ENCODE measurements at regions of chr19 and their contacts with region 1.

Region 1: DNA sequence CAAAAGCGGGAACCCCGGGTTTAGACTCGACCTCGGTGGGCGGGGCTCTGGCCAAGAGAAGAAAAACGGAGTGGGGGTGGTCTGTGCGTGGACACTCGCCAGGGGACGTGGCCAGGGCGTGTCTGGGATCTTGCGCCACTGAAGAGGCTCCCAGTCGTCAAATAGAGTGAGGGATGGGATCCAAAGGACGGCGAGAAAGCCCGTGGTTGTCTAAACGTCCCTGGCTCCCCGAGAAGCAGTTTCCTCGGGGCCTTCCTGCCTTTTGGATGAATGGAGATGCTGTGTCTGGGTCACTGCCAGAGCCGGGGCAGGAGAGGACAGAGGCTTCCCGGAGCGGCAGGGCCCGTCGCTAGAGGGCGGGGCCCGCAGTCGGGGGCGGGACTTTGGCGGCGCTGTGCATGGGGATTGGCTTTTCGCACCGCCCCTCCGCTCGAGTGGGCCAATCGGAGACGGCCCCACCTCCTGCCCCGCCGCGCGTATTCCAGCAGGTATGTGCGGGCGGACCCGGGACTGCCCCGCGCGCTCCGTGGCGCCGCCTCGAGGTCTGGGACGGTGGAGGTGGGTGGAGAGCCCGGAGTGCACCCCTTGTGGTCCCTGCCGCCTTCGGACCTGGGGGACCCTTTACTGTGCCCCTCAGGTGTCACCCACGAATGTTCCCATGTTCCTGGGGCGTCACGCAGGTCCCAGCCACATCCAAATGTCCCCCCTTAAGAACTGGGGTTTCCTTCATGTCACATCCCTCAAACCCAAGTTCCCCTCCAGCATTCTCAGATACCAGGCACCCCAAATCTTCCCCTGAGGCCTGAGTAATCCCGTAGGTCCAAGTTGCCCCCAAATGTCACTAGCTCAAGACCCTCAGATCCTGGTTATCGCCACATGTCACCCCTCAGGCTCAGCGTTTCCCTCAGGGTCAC is 38.3 kb downstream of the ZSWIM4 start:
- DNase-seq: peak; percentile 97
- ATAC-seq: peak; percentile 71
- H3K4me3 ChIP-seq: no peak overlapping the region
- H3K27ac ChIP-seq: peak overlapping the region; percentile 63
- H3K4me1 ChIP-seq: peaks cover 50% of the 10 kb centered on the region
- H3K27me3 ChIP-seq: no peaks in the 10 kb centered on the region
- CTCF ChIP-seq: peak; percentile 75

Region 2: DNA sequence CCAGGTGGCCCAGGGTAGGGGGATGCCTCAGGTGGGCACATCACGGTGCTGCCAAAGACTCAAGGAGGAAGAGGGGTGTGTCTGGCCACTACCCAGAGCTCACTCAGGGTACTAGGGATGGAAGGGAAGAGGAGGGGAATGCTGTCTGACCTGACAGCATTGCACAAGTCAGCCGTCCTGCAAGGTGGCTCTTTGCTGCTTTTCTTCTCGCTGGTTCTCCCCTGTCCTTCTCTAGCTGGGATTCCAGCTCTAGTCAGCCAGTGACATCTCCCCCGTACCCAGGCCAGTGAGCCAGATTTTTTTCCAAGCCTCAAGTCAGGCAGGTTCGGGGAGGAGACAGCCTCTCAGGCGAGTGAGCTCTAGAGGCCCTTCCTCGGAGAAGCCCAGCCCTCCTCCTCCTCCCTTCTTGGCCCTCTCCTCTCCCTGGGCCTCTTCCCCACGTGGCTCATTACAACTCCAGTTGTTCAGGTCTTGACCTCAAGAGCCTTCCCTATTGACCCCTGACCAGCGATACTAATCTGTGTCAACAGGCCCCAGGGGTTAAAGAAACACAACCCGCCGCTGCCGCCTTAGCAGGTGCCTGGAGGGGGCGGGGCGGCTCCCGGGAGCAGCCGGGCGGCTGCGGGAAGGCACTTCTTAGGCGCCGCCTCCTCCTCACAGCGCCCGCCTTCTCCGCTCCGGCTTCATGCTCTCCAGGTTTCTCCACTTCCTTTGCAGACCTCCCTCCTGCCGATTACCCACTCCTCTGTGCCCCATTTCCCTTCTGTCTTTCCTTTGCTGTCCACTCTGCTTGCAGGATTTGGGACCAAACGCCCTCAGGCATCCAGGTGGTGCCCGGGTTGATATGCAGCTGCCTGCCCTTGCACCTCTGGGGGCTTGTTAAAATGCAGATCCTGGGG is 782.1 kb before region 1 on chr19:
- CTCF ChIA-PET with region 1: no interaction called
- POLR2A ChIA-PET with region 1: interaction called, 24 read pairs
- intact Hi-C with region 1: no loop called
- DNase-seq: peak; percentile 84
- ATAC-seq: peak; percentile 14
- H3K4me3 ChIP-seq: peak overlapping the region; percentile 43
- H3K27ac ChIP-seq: peak overlapping the region; percentile 99
- H3K4me1 ChIP-seq: peaks cover 65% of the 10 kb centered on the region
- H3K27me3 ChIP-seq: no peaks in the 10 kb centered on the region
- CTCF ChIP-seq: no peak

Region 3: DNA sequence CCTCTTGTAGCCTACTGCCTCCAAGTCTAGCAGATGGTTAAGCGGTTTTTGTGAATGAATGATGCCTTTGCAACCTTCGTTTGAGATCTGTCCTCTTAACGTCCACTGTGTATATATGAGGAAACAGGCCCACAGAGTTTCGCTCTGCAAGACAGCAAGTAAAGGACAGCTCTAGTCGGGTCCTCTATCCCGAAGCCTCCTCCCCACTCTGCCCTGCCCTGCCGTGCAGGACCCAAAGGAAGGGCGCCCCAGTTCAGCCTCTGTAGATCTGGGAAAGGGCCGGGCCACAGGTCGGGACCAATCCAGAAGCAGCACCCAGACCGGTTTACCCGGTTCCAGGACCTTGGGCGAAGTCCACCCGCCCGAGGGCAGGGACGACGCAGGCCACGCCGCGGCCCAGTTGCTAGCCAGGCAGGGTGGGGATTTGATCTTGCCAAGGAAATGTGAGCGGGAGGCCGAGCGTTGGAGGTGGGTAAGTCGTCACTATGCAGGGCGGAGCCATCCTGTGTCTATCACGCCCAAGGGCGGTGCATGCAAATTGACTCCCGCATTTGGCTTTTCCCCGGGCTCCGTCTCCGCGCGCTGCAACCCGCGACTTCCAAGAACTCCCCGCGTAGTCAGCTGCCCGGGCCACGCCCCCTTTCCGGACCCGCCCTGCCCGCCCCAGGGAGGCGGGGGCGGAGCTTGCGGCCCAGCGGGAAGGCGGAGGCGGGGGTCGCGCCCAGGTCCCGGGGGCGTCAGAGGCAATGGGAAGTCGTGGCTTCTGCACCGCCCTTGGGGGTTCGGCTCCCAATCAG is 670.9 kb before region 1 on chr19:
- CTCF ChIA-PET with region 1: no interaction called
- POLR2A ChIA-PET with region 1: no interaction called
- intact Hi-C with region 1: loop called (anchors 10 kb)
- DNase-seq: peak; percentile 100
- ATAC-seq: peak; percentile 50
- H3K4me3 ChIP-seq: peak overlapping the region; percentile 67
- H3K27ac ChIP-seq: peak overlapping the region; percentile 97
- H3K4me1 ChIP-seq: peaks cover 63% of the 10 kb centered on the region
- H3K27me3 ChIP-seq: no peaks in the 10 kb centered on the region
- CTCF ChIP-seq: no peak

Region 4: DNA sequence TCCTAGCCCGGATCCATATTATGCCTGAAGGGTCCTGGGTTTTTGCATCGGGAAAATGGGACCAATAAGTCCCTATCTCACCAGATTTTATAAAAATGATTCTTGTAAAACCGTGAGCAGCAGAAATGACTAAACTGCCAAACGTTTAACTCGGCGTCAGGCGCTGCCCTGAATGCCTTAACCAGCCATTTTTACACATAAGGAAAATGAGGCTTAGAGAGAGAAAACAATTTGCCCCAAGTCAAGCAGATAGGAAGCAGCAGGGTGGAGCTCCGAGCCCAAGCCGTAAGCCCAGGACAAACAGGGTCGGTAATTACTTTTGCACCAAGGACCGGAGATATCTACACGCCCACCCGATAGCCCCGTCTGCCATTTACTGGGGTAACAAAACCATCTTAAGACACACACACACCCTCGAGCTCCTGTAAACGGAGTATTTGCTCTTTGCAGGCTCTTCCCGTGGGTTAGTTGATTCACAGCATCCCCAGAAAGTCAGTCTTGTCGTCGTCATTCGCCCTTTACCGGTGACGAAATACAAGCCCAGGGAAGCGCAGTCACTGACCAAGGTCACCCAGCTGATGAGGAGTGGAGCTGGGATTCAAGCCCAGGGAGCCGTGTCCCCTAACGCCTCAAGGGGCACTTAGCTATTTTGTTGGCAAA is 85.3 kb before region 1 on chr19:
- CTCF ChIA-PET with region 1: no interaction called
- POLR2A ChIA-PET with region 1: interaction called, 21 read pairs
- intact Hi-C with region 1: no loop called
- DNase-seq: peak; percentile 25
- ATAC-seq: no peak; the same call in 1 of the 2 replicates
- H3K4me3 ChIP-seq: peak overlapping the region; percentile 97
- H3K27ac ChIP-seq: peak overlapping the region; percentile 61
- H3K4me1 ChIP-seq: peaks cover 9% of the 10 kb centered on the region; the same call in 1 of the 2 replicates
- H3K27me3 ChIP-seq: no peaks in the 10 kb centered on the region
- CTCF ChIP-seq: no peak

Region 5: DNA sequence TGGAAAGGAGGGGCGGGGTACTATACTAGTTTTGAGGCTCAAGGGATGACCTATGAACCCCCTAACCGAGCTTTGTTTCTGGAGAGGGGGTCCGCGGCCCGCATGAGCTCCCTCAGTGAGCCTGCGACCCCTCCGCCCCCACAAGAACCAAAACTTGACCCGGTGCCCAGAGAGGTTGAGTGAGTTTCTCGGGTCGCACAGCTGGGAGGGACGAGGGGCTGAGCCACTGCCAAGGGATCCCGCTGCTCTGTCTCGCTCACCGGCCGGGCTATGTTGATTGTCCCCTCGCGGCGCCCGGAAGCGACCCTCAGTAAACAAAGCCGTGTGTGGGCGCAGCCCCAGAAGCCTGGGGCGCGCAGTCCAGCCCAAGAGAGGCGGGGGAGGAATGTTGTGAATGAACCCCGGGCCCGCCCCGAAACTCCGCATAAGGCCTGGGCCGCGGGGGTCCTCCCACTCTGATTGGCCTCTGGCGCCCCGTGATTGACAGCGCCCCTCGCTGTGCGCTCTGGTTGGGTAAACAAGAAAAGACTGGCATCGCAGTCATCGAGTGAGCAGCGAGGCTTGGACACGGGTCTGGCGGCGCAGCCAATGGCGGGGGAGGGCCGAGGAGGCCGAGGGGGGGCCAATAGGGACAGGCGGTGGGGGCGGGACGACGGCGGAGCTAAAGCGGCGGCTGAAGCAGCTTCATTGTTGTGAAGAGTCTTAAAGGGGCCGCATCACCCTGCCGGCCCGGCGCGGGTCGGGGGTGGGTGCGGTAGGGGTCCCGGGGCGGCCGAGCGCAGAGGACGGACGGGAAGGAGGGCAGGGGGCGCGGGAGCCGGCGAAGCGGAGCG is 38.6 kb before region 1 on chr19 and contains the start of gene ZSWIM4:
- CTCF ChIA-PET with region 1: no interaction called
- POLR2A ChIA-PET with region 1: interaction called, 15 read pairs
- intact Hi-C with region 1: loop called (anchors 2 kb)
- DNase-seq: peak; percentile 100
- ATAC-seq: peak; percentile 89
- H3K4me3 ChIP-seq: peak within 1 kb of the TSS; percentile 88
- H3K27ac ChIP-seq: peak within 1 kb of the TSS; percentile 95
- H3K4me1 ChIP-seq: peaks cover 23% of the 10 kb centered on the region
- H3K27me3 ChIP-seq: no peaks in the 10 kb centered on the region
- CTCF ChIP-seq: no peak
- total RNA-seq, gene ZSWIM4: 8.0 and 11.4 TPM in 2 replicates

Region 6: DNA sequence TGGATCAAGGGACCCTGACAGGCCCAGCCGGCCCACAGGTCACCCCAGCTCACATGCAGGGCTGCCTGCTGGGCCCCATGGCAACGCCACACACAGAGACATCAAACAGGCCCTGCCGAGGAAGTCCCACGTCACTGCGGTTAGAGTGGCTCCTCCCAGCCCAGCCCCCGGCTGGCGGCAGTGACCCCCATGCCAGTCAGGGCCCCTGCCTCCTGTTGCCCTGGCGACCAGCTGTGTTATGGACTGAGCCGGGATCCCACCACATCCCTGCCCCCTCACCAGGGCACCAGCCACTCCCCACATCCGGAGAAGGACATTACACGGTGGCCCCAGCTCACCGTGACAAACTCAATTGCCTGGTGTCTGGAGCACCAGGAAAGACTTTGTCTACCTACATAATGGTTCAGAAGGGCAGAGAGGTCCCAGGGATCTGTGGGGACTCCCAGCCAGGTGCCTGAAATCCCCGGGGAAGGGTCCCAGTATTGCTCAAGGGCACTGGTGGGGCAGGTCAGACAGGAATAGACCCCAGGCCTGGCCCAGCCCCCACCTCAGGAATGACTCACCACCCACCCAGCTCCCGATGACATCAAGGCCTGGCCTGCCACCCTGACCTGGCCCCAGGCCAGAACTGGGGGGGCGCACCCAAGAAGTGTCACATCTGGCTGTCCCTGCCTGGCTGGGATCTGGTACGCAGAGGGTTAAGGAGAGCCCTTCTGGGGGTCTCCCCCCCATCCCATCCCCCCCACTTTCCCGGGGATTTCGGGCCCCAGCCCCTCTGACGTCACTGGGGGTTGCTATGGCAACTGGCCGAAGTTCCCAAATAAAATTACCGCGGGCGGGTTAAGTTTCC is 13.2 kb after region 1 on chr19:
- CTCF ChIA-PET with region 1: no interaction called
- POLR2A ChIA-PET with region 1: interaction called, 7 read pairs
- intact Hi-C with region 1: loop called (anchors 2 kb)
- DNase-seq: peak; percentile 95
- ATAC-seq: peak; percentile 26
- H3K4me3 ChIP-seq: peak overlapping the region; percentile 64
- H3K27ac ChIP-seq: peak overlapping the region; percentile 99
- H3K4me1 ChIP-seq: peaks cover 72% of the 10 kb centered on the region
- H3K27me3 ChIP-seq: no peaks in the 10 kb centered on the region
- CTCF ChIP-seq: no peak